Mammary epithelial cell (primary cell): ENCODE measurements at regions of chr20 and their contacts with region 1.

Region 1: DNA sequence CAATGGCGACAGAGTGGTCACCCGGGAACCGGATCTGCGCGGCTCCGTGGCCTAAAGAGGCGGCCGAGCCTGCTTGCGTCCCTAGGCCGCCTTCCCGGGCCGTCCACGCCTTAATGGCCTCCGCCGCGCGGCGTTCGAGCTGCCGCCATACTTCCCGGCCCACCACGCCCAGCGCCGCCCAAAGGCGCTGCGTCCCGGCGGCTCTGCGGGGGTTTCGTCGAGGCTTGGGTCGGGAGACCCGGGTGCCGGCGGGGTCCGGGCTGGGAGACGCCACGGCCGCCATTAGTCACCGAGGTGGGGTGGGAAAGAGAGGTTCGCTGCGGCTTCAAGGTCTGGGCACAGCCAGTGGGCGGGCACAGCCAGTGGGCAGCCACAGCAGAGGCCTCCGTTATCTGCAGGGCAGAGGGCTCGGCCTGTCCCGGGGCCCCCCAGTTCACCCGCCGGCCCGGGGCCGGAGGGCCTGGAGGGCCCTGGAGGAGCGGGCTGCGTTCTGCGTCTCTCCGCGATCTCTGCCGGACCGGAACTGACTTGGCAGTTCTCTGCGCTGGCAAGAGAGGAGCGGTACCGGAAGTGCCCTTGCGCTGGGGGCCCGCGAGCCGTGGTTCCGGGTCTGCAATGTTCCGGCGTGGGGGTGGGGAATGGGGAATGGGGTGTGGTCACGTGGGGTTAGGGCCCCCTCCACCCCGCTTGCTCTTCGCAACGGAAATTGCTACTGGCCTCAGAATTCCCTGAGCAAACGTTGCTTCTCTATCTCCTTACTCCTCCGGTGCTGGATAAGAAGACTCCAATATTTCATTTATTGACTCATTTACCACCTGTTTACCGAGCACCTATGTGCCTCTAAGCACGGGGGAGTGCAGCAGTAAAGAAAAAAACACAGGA is 82.3 kb downstream of the CNBD2 start:
- DNase-seq: peak; percentile 76
- H3K4me3 ChIP-seq: peak overlapping the region; percentile 74 to 93 (median 86)
- H3K27ac ChIP-seq: peak overlapping the region; percentile 87
- H3K4me1 ChIP-seq: peaks cover 15% of the 10 kb centered on the region
- H3K27me3 ChIP-seq: no peaks in the 10 kb centered on the region
- CTCF ChIP-seq: no peak

Region 2: DNA sequence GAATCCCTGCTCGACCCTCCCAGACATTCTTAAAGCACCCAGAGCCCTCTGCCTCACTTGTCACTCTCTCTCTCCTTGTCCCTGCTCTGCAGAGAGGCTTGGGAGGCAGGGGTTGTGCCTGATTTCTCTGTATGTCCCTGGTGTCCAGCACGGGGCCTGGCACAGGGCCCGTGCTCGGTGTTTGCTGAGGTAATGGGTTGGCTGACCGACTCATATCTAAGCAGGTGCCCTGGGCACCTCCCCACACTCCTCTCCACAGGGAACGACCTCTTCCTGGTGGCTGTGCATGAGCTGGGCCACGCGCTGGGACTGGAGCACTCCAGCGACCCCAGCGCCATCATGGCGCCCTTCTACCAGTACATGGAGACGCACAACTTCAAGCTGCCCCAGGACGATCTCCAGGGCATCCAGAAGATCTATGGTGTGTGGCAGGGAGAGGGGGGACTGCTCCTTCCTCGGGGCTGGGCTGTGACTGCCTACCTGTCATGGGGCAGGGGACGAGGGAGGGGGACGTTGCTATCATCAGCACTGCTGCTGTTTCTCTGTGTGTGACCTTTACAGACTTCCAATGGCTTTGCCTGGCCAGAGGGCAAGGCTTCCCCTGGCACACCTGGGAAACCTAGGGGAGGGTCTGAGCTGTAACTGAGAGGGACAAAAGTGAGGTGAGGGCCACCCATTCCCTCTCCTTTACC is 787.0 kb before region 1 on chr20:
- CTCF ChIA-PET with region 1: interaction called, 24 read pairs
- dilution Hi-C with region 1: no loop called
- in situ Hi-C with region 1: no loop called
- intact Hi-C with region 1: no loop called
- DNase-seq: no peak
- H3K4me3 ChIP-seq: no peak overlapping the region
- H3K27ac ChIP-seq: peak overlapping the region; percentile 9
- H3K4me1 ChIP-seq: peaks cover 14% of the 10 kb centered on the region
- H3K27me3 ChIP-seq: no peaks in the 10 kb centered on the region
- CTCF ChIP-seq: no peak

Region 3: GRCh38 chr20:36035745-36036144 is 14.9 kb before region 1 on chr20:
- CTCF ChIA-PET with region 1: no interaction called
- dilution Hi-C with region 1: no loop called
- in situ Hi-C with region 1: no loop called
- intact Hi-C with region 1: loop called (anchors 1 kb)
- DNase-seq: peak; percentile 95
- H3K4me3 ChIP-seq: no peak overlapping the region
- H3K27ac ChIP-seq: no peak overlapping the region
- H3K4me1 ChIP-seq: peaks cover 17% of the 10 kb centered on the region
- H3K27me3 ChIP-seq: no peaks in the 10 kb centered on the region
- CTCF ChIP-seq: no peak

Region 4: GRCh38 chr20:36132802-36133211 is 82.1 kb after region 1 on chr20:
- CTCF ChIA-PET with region 1: no interaction called
- dilution Hi-C with region 1: no loop called
- in situ Hi-C with region 1: no loop called
- intact Hi-C with region 1: loop called (anchors 1 kb)
- DNase-seq: no peak
- H3K4me3 ChIP-seq: no peak overlapping the region
- H3K27ac ChIP-seq: no peak overlapping the region
- H3K4me1 ChIP-seq: peaks cover 9% of the 10 kb centered on the region
- H3K27me3 ChIP-seq: no peaks in the 10 kb centered on the region
- CTCF ChIP-seq: no peak

Region 5: DNA sequence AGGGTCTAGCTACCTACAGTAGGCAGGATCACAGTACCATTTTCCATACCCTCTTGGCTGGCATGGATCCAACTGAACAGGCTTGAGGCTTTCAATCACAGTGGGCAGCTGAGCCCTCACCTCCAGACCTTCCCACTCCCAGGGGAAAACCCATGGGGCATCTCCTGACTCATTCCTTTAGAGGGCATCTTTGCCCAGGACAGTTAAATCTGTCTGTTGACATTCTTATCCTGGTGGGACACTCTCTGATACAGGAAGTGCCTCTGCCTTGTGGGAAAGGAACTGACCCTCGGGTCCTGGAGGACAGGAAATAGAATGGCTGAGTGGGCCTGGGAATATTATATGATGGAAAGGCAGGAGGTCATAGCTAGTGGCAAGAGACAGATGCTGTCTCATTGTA is 93.7 kb after region 1 on chr20:
- CTCF ChIA-PET with region 1: no interaction called
- dilution Hi-C with region 1: no loop called
- in situ Hi-C with region 1: no loop called
- intact Hi-C with region 1: no loop called
- DNase-seq: no peak
- H3K4me3 ChIP-seq: no peak overlapping the region
- H3K27ac ChIP-seq: no peak overlapping the region
- H3K4me1 ChIP-seq: peaks cover 13% of the 10 kb centered on the region
- H3K27me3 ChIP-seq: no peaks in the 10 kb centered on the region
- CTCF ChIP-seq: no peak